PC-3 (cell line): ENCODE measurements at regions of chr2 and their contacts with region 1.

Region 1: DNA sequence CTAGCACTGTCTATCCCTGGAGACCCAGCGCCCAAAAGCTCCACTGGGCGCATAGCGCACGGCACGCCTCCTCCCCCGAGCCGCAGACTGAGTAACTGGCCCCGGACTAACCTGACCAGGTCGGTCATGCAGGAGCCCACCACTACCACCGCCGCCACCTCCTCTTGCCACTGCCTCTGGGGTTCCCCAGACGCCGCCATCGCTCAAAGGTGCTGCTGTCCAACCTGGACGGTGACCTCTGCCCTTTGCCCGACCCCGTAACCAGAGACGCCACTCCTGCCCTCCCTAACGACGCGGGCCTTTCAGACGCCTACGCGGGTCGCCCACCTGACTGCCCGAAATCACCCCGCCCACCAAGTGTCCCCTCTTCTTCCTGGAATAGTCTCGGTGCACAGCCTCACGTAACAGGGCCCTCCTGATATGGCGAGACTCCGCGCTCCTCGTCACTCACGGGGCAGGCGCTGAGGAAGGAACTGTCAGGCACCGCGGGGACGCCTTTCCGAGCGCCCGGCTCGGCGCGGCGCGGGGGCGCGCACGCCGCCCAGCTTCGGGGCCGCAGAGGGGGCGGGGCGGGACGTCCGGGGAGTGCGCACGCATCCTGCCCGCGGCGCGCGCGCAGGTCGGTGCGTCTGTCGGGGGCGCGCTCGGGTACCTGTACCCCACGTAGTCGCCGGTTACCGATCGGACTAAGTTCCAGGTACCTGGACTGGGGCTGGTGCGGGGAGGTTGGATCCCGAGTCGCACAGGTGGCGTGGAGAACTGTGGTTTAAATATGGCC is at the starts of genes BABAM2 and RBKS:
- DNase-seq: peak; percentile 87
- ATAC-seq: peak; percentile 86
- H3K4me3 ChIP-seq: peak within 1 kb of the TSS; percentile 88
- H3K27ac ChIP-seq: peak within 1 kb of the TSS; percentile 79
- H3K4me1 ChIP-seq: peaks cover 27% of the 10 kb centered on the region
- H3K27me3 ChIP-seq: no peaks in the 10 kb centered on the region
- CTCF ChIP-seq: no peak
- total RNA-seq, gene BABAM2: 16.3 and 17.9 TPM in 2 replicates
- total RNA-seq, gene RBKS: 1.8 and 2.6 TPM in 2 replicates

Region 2: DNA sequence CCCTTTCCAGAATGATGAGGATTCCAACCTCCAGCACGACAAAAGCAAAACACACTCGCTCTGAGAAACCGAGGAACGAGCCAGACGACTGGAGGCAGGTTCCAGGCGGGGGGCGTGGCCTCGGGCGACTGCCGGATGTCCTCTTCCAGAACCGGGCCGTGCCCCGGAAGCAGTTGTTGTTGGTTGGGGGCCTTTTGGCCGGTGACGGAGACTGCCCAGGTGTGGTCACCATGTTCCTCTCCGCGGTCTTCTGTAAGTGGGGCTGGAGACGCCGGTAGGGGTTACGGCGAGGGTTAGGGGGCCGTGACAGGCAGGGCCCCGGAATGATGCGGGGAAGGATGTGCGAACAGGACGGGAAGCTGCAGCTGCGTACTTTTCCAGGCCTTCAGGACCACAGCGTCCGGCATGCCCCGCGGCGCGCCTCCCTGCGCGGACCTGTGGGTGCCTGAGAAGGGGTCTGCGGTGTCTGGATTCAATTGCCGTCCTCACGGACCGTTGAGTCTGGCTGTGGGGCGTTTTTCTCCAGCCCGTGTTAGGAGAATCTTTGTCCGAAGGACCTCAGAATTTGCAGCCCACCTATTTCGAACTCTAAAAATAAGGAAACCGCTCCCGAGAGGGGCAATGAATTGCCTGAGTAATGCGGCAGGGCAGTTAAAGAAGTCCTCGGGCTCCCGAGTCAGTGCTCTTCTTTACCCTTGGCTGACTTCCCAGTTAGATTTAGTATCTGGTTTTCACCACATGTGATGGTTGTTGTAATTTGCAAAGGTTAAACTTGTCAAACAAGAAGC is 118.6 kb before region 1 on chr2 and contains the start of gene MRPL33:
- CTCF ChIA-PET with region 1: no interaction called
- POLR2A ChIA-PET with region 1: interaction called, 4 read pairs
- intact Hi-C with region 1: loop called (anchors 10 kb)
- DNase-seq: peak; percentile 93
- ATAC-seq: peak; percentile 92
- H3K4me3 ChIP-seq: peak within 1 kb of the TSS; percentile 96
- H3K27ac ChIP-seq: peak within 1 kb of the TSS; percentile 62
- H3K4me1 ChIP-seq: peaks cover 40% of the 10 kb centered on the region
- H3K27me3 ChIP-seq: no peaks in the 10 kb centered on the region
- CTCF ChIP-seq: no peak
- total RNA-seq, gene MRPL33: 95.7 and 110 TPM in 2 replicates

Region 3: DNA sequence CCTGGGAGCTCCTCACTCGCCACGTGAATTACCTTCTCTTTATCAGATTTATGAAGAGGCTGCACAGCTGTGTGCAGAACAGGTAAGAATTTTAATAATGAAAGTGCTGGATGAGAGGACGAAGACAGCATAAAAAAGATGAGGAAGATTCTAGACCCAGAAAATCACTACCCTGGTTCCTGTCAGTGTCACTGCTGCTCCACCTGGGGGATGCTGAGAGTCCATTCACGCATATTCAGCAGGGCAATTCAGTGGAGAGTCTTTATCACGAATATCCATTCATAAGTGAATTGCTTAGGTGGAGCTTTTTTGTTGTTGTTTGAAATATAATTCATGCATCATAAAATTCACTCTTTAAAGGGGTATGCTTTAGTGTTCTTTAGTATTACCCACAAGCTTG is 66.8 kb before region 1 on chr2:
- CTCF ChIA-PET with region 1: no interaction called
- POLR2A ChIA-PET with region 1: no interaction called
- intact Hi-C with region 1: no loop called
- DNase-seq: no peak
- ATAC-seq: no peak
- H3K4me3 ChIP-seq: no peak overlapping the region
- H3K27ac ChIP-seq: no peak overlapping the region
- H3K4me1 ChIP-seq: no peaks in the 10 kb centered on the region
- H3K27me3 ChIP-seq: no peaks in the 10 kb centered on the region
- CTCF ChIP-seq: no peak

Region 4: GRCh38 chr2:27942612-27943547 is 52.5 kb after region 1 on chr2:
- CTCF ChIA-PET with region 1: no interaction called
- POLR2A ChIA-PET with region 1: interaction called, 10 read pairs
- intact Hi-C with region 1: no loop called
- DNase-seq: no peak
- ATAC-seq: no peak
- H3K4me3 ChIP-seq: no peak overlapping the region
- H3K27ac ChIP-seq: no peak overlapping the region
- H3K4me1 ChIP-seq: no peaks in the 10 kb centered on the region
- H3K27me3 ChIP-seq: no peaks in the 10 kb centered on the region
- CTCF ChIP-seq: no peak